AG04449 (cell line): ENCODE measurements at regions of chr10 and their contacts with region 1.

Region 1: GRCh38 chr10:89217057-89217990 is 10.2 kb upstream of the CH25H start:
- DNase-seq: no peak
- H3K4me3 ChIP-seq: no peak overlapping the region
- CTCF ChIP-seq: peak; percentile 45

Region 2: GRCh38 chr10:88990384-88991160 is 226.8 kb before region 1 on chr10 and contains the start of gene FAS:
- CTCF ChIA-PET with region 1: interaction called, 70 read pairs
- POLR2A ChIA-PET with region 1: interaction called, 3 read pairs
- DNase-seq: no peak
- H3K4me3 ChIP-seq: peak within 1 kb of the TSS; percentile 77
- CTCF ChIP-seq: no peak

Region 3: GRCh38 chr10:89029785-89030437 is 187.4 kb before region 1 on chr10:
- CTCF ChIA-PET with region 1: interaction called, 225 read pairs
- POLR2A ChIA-PET with region 1: interaction called, 6 read pairs
- DNase-seq: peak; percentile 29
- H3K4me3 ChIP-seq: no peak overlapping the region
- CTCF ChIP-seq: peak; percentile 75

Region 4: GRCh38 chr10:89100680-89101079 is 116.6 kb before region 1 on chr10:
- CTCF ChIA-PET with region 1: no interaction called
- POLR2A ChIA-PET with region 1: no interaction called
- DNase-seq: no peak
- H3K4me3 ChIP-seq: no peak overlapping the region
- CTCF ChIP-seq: no peak

Region 5: DNA sequence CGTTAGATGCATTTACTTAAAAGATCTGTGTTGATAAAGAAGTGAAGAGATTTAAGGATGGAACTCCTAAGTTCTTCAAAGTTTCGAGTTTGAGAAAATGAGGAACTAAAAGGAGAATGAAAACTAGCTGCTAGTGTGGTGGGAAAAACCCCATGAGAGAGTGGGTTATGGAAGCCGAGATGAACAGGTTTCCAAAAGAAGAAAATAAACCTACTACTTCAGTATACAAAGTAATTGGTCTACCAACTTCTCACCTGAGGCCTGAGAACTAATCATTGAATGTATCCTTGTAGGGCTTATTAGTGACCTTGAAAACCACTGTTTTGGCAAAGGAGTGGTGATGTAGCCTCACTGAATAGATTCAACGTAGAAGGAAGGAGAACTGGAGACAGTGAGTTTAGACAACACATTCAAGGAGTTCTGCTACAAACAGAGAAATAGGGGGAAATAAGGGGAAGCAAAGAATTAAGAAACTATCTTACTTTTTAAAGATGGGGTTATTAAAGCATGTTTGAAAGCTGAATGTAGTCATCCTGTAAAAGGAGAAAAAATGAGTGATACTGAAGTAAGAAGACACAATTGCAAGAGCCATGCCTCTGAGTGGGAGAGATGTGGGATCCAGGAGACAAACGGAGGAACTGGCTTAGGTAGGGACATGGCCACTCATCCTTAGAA is 61.0 kb before region 1 on chr10:
- CTCF ChIA-PET with region 1: no interaction called
- POLR2A ChIA-PET with region 1: no interaction called
- DNase-seq: no peak
- H3K4me3 ChIP-seq: no peak overlapping the region
- CTCF ChIP-seq: no peak

Region 6: DNA sequence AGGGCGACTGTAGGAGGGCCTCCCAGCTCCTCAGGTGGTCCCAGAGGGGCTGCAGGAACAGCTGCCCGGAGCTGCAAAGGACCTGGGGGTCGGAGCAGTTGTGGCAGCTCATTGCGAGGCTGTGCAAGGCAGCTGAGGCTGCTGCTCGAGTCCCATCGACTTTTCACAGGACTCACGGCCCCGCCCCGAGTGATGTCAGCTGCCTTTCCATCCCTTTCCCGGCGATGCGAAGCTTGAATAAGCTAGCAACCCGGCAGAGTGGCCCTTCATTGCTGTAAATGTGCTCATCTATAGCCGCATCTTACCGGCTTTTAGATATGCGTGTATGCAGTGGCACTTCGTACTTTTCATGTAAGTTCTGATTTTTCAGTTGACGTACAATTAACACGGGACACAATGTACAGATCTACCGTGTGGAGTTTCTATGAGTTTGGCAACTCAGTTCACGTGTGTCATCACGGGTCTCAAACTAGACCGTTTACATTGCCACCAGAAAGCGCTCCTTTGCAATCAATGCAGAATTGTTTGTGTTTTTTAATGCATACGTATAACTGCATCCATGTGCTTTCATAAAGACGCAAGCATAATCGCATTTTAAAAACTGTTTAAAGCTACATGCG is 10.0 kb before region 1 on chr10 and contains the start of gene CH25H:
- CTCF ChIA-PET with region 1: interaction called, 33 read pairs
- POLR2A ChIA-PET with region 1: no interaction called
- DNase-seq: no peak
- H3K4me3 ChIP-seq: peak within 1 kb of the TSS; percentile 66
- CTCF ChIP-seq: no peak

Region 7: DNA sequence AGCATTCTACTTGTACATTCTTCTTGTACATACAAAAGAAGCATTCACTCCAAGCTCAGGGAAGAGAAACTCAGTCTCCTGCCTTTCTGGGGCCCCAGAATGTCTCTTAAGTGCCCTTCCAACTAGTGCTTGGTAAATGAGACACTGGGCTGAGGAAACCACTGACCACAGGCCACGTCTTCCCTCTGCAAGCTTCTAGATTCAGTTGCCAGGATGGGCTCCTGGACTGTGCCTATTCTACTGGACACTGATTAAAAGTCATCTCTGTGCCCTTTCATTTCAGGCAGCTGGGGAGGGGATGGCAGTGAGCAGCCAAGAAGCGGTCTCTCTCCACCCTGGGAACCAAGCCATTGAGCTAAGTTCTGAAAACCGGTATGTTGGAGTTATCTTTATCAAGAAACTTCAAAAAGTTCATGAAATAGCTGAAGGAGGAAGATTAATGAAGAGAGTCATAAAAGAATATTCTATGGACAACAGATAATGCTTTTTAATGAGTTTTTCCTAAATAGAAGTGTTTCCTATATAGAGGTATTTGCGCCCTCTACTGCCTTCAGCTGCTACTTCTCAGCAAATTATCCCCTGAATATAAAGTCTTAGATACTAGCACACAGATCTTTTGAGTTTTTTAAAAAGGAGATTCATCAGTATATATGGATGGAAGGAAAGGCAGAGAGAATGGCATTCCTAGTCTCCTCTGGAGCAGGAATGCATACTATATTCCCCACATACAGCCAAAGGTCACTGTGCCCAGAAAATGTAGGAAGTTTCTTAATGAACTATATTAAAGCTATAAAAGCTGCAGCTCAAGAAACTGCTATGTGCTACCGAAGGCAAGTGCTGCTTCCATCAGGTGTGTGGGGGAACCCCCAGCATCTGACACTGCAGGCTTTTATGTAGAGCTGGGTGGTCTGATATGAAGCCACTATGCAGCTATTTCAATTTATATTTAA is 152.1 kb after region 1 on chr10:
- CTCF ChIA-PET with region 1: interaction called, 27 read pairs
- POLR2A ChIA-PET with region 1: no interaction called
- DNase-seq: no peak
- H3K4me3 ChIP-seq: no peak overlapping the region
- CTCF ChIP-seq: peak; percentile 35